Vagina (tissue), 2 donors: ENCODE measurements at regions of chr19 and their contacts with region 1.

Region 1: DNA sequence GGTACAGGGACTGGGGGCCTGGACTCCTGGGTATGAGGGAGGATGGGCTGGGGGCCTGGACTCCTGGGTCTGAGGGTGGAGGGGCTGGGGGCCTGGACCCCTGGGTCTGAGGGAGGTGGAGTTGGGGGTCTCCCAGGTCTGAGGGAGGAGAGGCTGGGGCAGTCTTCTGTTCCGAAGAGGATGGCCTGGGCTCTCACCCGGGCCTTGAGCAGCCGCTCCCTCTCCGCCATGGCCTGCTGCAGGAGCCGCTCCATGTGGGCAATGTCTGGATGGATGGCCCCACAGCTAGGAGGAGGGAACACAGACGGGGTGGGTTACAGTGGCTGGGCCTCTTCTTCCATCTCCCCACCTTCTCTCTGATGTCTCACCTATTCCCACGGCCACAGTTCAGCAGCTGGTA is 18.1 kb downstream of the PHLDB3 start:
- DNase-seq: no peak
- H3K4me3 ChIP-seq: no peak overlapping the region
- H3K27ac ChIP-seq: no peak overlapping the region
- H3K4me1 ChIP-seq: no peaks in the 10 kb centered on the region
- H3K27me3 ChIP-seq: no peaks in the 10 kb centered on the region
- CTCF ChIP-seq: no peak
- POLR2A ChIP-seq: no peak

Region 2: GRCh38 chr19:43438291-43439096 is 47.9 kb before region 1 on chr19:
- intact Hi-C with region 1: loop called (anchors 1 kb)
- DNase-seq: no peak
- H3K4me3 ChIP-seq: no peak overlapping the region
- H3K27ac ChIP-seq: peak overlapping the region; percentile 70
- H3K4me1 ChIP-seq: peaks cover 23% of the 10 kb centered on the region
- H3K27me3 ChIP-seq: no peaks in the 10 kb centered on the region
- CTCF ChIP-seq: no peak
- POLR2A ChIP-seq: no peak

Region 3: DNA sequence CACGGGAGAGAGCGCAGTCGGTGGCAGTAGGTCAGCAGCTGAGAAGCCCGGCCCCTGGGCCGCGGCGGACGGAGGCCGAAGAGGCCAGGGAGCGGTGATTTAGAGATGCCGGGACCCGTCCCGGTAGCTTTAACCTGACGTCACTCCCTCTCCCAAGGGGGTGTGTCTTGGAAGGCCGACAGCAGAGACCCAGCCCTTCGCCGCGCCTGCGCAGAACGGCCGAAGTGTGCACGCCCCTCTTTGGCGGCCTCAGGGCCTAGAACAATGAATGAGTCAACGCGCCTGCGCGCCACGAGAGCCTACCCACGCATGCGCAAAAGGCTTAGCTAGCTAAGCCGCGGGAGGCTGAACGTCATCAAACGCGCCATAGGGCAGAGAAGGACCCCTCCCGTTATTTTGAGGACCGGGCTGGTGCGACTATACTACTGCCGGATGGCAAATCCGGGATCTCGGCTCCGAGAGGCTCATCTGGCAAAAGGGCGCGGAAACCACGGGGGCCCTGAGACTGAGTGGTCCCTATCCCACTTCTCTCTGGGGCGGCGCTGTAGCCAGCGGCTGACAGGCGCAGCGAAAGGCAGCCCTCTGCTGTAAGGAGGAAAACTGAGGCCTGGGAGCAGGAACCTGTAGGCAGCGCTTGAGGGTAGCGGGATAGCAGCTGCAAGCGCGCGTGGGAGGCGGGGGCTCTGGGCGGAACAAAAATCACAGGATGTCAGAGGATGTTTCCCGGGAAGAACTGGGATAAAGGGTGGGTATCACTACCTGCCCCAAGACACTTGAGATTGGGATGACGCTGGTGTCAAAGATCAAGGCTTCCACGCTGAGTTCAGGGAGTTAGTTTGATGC is 109.8 kb after region 1 on chr19 and contains the starts of genes IRGQ and ZNF576:
- intact Hi-C with region 1: no loop called
- DNase-seq: peak; percentile 99 to 100
- H3K4me3 ChIP-seq: peak within 1 kb of the TSS; percentile 62 to 64
- H3K27ac ChIP-seq: peak within 1 kb of the TSS; percentile 96
- H3K4me1 ChIP-seq: peaks cover 39% of the 10 kb centered on the region
- H3K27me3 ChIP-seq: no peaks in the 10 kb centered on the region
- CTCF ChIP-seq: no peak
- POLR2A ChIP-seq: peak; percentile 20 to 90
- total RNA-seq, gene IRGQ: 11.0 TPM
- total RNA-seq, gene ZNF576: 21.9 TPM